Breast epithelium (tissue), 4 donors: ENCODE measurements at regions of chr17 and their contacts with region 1.

Region 1: GRCh38 chr17:76506408-76507349 is 5.5 kb upstream of the RHBDF2 start:
- DNase-seq: peak; percentile 73 to 90
- H3K4me3 ChIP-seq: no peak overlapping the region
- H3K27ac ChIP-seq: no peak overlapping the region
- H3K4me1 ChIP-seq: no peaks in the 10 kb centered on the region
- H3K27me3 ChIP-seq: no peaks in the 10 kb centered on the region
- CTCF ChIP-seq: peak; percentile 90 to 96 (median 95)
- POLR2A ChIP-seq: no peak

Region 2: GRCh38 chr17:75154195-75155106 is 1352.2 kb before region 1 on chr17 and contains the start of gene JPT1:
- intact Hi-C with region 1: no loop called
- DNase-seq: peak; percentile 99
- H3K4me3 ChIP-seq: peak within 1 kb of the TSS; percentile 77 to 92 (median 86)
- H3K27ac ChIP-seq: peak within 1 kb of the TSS; percentile 40 to 87
- H3K4me1 ChIP-seq: no peaks in the 10 kb centered on the region
- H3K27me3 ChIP-seq: no peaks in the 10 kb centered on the region
- CTCF ChIP-seq: peak in 1 of 3 donors; percentile 29
- POLR2A ChIP-seq: peak; percentile 94
- total RNA-seq, gene JPT1: 9.9 to 30.5 (median 24.9) TPM

Region 3: DNA sequence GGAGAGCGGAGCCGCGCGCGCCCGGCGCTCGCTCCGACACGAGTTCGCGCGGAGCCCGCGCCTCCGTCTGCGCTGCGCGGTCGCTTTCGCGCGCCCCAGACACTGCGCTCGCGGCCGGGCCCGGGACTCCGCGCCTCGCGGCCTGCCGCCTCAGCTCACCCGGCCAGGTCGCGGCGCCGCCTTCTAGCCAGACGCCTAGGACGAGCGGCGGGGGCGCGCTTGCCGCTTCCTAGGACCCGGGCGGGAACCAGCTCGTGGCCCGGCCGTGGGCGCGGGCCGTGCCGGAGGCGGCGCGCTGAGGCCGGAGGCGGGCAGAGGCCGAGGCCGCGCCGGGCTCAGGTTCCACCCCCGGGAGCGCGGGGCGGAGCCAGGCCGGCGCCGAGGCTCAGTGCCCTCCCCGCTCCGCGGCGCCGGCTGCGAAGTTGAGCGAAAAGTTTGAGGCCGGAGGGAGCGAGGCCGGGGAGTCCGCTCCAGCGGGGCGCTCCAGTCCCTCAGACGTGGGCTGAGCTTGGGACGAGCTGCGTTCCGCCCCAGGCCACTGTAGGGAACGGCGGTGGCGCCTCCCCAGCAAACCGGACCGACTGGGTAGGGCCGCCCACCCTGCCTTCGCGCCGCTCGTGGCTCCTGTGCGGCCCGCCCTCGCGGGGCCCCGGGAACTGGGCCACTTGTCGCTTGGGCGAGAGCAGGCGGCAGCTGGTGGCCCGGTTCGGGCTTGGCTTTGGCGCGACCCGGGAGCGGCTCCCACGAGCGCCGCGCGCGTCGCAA is 122.3 kb before region 1 on chr17 and contains the start of gene SPHK1:
- intact Hi-C with region 1: no loop called
- DNase-seq: no peak
- H3K4me3 ChIP-seq: peak within 1 kb of the TSS; percentile 51 to 66 (median 62)
- H3K27ac ChIP-seq: peak within 1 kb of the TSS; percentile 88 to 89
- H3K4me1 ChIP-seq: peaks cover 0 to 20% of the 10 kb centered on the region in 2 donors
- H3K27me3 ChIP-seq: no peaks in the 10 kb centered on the region
- CTCF ChIP-seq: no peak
- POLR2A ChIP-seq: peak; percentile 31
- total RNA-seq, gene SPHK1: 9.6 to 28.5 (median 23.0) TPM

Region 4: DNA sequence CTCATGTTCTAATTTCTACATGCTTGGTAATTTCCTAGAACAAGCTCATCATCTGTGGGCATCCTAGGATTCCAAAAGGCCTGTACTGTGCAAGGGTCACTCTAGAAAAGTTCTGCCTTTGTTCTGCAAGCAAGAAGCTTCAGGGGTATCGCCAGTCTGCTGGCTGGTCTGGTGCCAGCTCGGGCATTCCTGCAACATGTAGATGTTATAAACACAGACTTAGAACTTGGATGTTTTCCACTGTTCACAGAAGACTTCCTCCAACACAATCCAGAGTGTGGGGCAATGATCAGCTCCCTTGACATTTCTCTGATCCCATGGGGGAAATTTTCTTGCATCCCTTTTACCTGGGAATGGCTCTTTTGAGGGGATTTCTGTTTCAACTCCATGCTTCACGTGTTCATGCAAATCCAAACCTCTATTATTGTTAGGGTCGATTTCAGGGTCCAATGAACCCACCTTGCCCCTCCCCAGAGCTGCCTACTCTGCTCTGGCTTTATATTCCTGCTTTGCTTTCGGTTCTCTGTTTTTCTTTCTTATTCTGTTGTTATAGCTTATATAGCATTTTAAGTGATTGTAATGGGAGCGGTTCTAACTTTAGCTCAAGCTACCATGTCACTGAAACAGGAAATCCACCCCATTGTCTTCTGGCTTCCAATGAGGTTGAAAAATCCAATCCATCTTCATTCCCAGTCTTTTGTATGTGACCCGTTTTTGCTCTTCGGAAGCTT is 79.0 kb before region 1 on chr17:
- intact Hi-C with region 1: no loop called
- DNase-seq: no peak
- H3K4me3 ChIP-seq: no peak overlapping the region
- H3K27ac ChIP-seq: no peak overlapping the region
- H3K4me1 ChIP-seq: peaks cover 0 to 4% of the 10 kb centered on the region in 2 donors
- H3K27me3 ChIP-seq: no peaks in the 10 kb centered on the region
- CTCF ChIP-seq: no peak
- POLR2A ChIP-seq: no peak

Region 5: DNA sequence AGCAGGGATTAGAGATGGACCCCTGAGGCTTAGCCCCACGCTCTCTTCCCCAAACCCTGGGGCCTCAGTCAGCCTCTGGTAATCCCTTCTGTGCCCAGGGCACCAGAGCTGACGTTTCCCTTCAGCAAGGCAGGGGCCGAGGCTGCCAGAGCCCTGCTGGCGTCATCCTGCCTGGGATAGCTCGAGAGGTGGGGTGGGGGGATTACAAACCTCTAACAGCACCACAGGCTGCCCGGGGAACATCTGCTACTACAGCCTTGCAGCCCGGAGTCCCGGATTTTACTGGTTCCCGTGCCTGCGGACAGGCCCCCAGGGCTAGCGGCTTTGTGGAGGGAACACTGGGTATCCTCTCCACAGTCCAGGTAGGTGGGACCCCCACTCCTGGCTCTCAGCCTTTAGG is 39.3 kb before region 1 on chr17 and contains the start of gene AANAT:
- intact Hi-C with region 1: loop called (anchors 5 kb)
- DNase-seq: no peak
- H3K4me3 ChIP-seq: no peak within 1 kb of the TSS
- H3K27ac ChIP-seq: no peak within 1 kb of the TSS
- H3K4me1 ChIP-seq: no peaks in the 10 kb centered on the region
- H3K27me3 ChIP-seq: no peaks in the 10 kb centered on the region
- CTCF ChIP-seq: no peak
- POLR2A ChIP-seq: no peak
- total RNA-seq, gene AANAT: not detected